Activated naive CD4-positive, alpha-beta T cell treated with anti-CD3 and anti-CD28 coated beads for 36 hours (primary cell): ENCODE measurements at regions of chr20 and their contacts with region 1.

Region 1: GRCh38 chr20:32574296-32575226 is 10.6 kb downstream of the NOL4L start:
- DNase-seq: peak; percentile 84
- H3K4me3 Mint-ChIP-seq: no peak overlapping the region
- H3K27ac Mint-ChIP-seq: no peak overlapping the region
- H3K4me1 Mint-ChIP-seq: peaks cover 39% of the 10 kb centered on the region
- H3K27me3 Mint-ChIP-seq: no peaks in the 10 kb centered on the region

Region 2: DNA sequence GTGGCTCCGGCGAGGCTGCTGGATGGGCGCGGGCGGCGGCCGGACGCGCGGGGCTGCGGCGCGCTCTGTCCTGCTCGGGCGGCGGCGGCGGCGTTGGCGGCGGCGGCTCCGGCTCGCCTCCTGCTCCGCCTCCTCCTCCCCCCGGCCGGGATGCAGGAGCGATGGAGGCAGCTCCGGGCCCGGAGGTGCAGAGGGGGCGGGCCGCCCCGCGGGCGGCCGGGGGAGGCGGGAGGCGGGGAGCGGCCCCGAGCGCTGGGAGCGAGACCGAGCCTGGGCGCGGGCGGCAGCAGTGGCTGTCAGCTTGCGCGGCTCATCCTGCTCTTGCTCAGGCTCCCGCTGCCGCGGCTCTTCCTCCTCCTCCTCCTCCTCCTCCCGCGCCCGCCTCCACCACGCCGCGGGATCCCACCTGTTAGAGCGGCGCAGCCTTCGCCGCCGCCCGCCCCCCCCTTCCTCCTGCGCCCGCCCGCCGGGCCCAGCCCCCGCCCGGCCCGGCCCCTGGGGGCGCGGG is 10.5 kb after region 1 on chr20 and contains the start of gene NOL4L:
- CTCF ChIA-PET with region 1: interaction called, 4 read pairs
- intact Hi-C with region 1: loop called (anchors 1 kb)
- DNase-seq: peak; percentile 57
- H3K4me3 Mint-ChIP-seq: peak within 1 kb of the TSS; percentile 74
- H3K27ac Mint-ChIP-seq: peak within 1 kb of the TSS; percentile 60
- H3K4me1 Mint-ChIP-seq: peaks cover 33% of the 10 kb centered on the region
- H3K27me3 Mint-ChIP-seq: no peaks in the 10 kb centered on the region
- total RNA-seq, gene NOL4L: 24.8 to 29.2 TPM